ENCODE measurements at regions of chr2 and their contacts with region 1.

Region 1: DNA sequence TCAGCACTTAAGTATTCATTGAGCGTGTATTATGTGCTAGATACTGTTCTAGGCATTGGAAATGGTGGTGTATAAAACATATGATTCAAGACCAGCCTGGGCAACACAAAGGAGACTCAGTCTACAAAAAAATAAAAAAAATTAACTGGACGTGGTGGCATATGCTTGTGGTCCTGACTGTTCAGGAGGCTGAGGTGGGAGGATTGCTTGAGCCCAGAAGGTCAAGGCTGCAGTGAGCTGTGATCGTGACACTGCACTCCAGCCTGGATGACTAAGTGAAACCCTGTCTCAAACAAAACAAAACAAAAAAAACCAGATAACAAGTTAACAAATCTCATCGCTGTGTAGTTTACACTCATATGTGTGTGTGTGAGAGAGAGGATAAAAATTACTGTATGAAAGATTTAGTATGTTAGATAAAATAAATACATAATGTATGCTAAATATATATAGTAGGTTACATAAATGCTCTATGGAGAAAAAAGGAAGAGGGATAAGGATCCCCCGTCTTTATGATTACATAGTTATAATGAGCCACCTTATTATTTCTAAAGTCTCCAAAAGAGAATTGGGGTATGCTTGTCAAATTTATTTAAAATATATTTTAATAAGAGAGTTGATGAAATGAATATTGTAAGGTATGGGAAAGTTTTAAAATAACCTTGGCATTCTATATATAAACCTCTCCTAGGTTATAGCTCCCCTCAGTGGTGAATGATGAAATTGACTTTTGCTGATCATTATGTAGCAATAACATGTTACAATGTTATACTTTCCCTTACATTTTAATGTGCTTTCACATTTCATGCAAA is 69.2 kb downstream of the EHBP1 start:
- DNase-seq: peak in 3 of 14 experiments; percentile 50 to 58 (median 53)
- ATAC-seq: no peak
- H3K4me3 ChIP-seq: no peak overlapping the region
- H3K4me3 Mint-ChIP-seq: no peak overlapping the region
- H3K27ac ChIP-seq: no peak overlapping the region
- H3K27ac Mint-ChIP-seq: no peak overlapping the region
- H3K4me1 ChIP-seq: no peaks in the 10 kb centered on the region
- H3K4me1 Mint-ChIP-seq: no peaks in the 10 kb centered on the region
- H3K27me3 ChIP-seq: no peaks in the 10 kb centered on the region
- H3K27me3 Mint-ChIP-seq: no peaks in the 10 kb centered on the region
- CTCF ChIP-seq: peak; percentile 79

Region 2: DNA sequence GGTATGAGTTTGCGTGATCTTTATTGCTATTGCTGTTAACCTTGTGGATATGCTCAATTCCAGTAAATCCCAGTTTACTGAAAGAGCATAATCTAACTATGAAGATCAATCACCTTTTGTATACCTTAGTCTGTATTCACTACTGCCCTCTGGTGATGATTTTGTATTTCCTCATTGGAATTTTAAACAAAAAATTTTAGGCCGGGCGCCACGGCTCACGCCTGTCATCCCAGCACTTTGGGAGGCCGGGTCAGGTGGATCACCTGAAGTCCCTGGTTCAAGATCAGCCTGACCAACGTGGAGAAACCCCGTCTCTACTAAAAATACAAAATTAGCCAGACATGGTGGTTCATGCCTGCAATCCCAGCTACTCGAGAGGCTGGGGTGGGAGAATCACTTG is 864.2 kb before region 1 on chr2:
- CTCF ChIA-PET with region 1: no interaction called
- POLR2A ChIA-PET with region 1: no interaction called
- intact Hi-C with region 1: loop called in 1 of 2 experiments (anchors 5 kb)
- DNase-seq: no peak
- ATAC-seq: no peak
- H3K4me3 ChIP-seq: no peak overlapping the region
- H3K4me3 Mint-ChIP-seq: no peak overlapping the region
- H3K27ac ChIP-seq: no peak overlapping the region
- H3K27ac Mint-ChIP-seq: no peak overlapping the region
- H3K4me1 ChIP-seq: peaks cover 8% of the 10 kb centered on the region
- H3K4me1 Mint-ChIP-seq: peaks cover 23% of the 10 kb centered on the region
- H3K27me3 ChIP-seq: no peaks in the 10 kb centered on the region
- H3K27me3 Mint-ChIP-seq: no peaks in the 10 kb centered on the region
- CTCF ChIP-seq: no peak

Region 3: DNA sequence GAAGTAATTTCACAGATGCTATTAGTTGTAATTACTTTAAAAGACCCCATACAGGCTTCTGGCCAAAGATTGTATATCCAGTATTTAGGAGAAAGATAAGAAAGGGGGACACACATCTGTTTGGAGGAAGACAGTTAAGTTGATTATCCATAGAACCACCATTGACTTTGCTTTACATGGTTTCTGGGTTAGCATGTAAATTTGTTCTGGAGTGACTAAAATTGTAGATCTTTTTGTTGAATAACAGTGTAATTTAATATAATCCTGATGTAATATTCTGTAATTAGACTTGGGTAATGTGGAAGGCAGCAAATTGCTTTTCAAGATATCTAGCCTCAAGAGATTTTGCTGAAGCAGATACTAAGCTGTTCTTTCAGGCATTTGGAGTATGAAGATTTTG is 852.0 kb before region 1 on chr2:
- CTCF ChIA-PET with region 1: no interaction called
- POLR2A ChIA-PET with region 1: no interaction called
- intact Hi-C with region 1: loop called (anchors 1 to 5 kb)
- DNase-seq: no peak
- ATAC-seq: no peak
- H3K4me3 ChIP-seq: no peak overlapping the region
- H3K4me3 Mint-ChIP-seq: no peak overlapping the region
- H3K27ac ChIP-seq: no peak overlapping the region
- H3K27ac Mint-ChIP-seq: no peak overlapping the region
- H3K4me1 ChIP-seq: no peaks in the 10 kb centered on the region
- H3K4me1 Mint-ChIP-seq: no peaks in the 10 kb centered on the region
- H3K27me3 ChIP-seq: no peaks in the 10 kb centered on the region
- H3K27me3 Mint-ChIP-seq: no peaks in the 10 kb centered on the region
- CTCF ChIP-seq: no peak

Region 4: DNA sequence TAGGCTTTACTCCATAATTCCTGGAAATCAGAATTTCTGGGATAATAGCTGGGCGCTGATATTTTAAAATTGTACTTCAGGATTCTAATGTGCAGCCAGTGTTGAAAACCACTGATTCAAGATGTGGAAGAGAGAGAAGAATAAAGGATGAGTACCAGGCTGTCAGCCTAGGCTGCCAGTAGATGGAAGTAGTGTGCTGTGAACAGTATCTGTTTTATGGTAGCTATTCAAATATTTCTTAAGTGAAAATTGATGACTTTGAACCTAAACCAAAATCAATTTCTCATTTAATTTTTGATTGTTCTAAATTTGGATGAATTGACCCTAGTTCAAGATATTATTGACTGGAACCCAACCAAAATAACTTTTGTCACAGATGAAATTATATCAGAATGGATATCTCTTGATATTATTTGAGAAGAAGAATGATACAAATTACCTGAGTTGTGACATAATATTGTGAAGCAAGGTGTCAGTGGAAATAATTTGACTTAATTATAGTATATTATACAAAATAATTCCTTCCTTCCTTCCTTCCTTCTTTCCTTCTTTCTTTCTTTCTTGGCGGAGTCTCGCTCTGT is 781.2 kb before region 1 on chr2:
- CTCF ChIA-PET with region 1: interaction called, 3 read pairs
- POLR2A ChIA-PET with region 1: no interaction called
- intact Hi-C with region 1: loop called in 1 of 2 experiments (anchors 10 kb)
- DNase-seq: peak in 4 of 14 experiments; percentile 10 to 49 (median 46)
- ATAC-seq: no peak
- H3K4me3 ChIP-seq: no peak overlapping the region
- H3K4me3 Mint-ChIP-seq: no peak overlapping the region
- H3K27ac ChIP-seq: no peak overlapping the region
- H3K27ac Mint-ChIP-seq: no peak overlapping the region
- H3K4me1 ChIP-seq: no peaks in the 10 kb centered on the region
- H3K4me1 Mint-ChIP-seq: peaks cover 6% of the 10 kb centered on the region
- H3K27me3 ChIP-seq: no peaks in the 10 kb centered on the region
- H3K27me3 Mint-ChIP-seq: no peaks in the 10 kb centered on the region
- CTCF ChIP-seq: no peak